HAP-1 (cell line): ENCODE measurements at regions of chr12 and their contacts with region 1.

Region 1: GRCh38 chr12:48618541-48618940 is 48.7 kb upstream of the LALBA start:
- DNase-seq: peak; percentile 61 to 86
- H3K4me3 ChIP-seq: no peak overlapping the region
- H3K4me1 ChIP-seq: no peaks in the 10 kb centered on the region
- H3K27me3 ChIP-seq: peaks cover 2% of the 10 kb centered on the region; the same call in 1 of the 2 replicates

Region 2: DNA sequence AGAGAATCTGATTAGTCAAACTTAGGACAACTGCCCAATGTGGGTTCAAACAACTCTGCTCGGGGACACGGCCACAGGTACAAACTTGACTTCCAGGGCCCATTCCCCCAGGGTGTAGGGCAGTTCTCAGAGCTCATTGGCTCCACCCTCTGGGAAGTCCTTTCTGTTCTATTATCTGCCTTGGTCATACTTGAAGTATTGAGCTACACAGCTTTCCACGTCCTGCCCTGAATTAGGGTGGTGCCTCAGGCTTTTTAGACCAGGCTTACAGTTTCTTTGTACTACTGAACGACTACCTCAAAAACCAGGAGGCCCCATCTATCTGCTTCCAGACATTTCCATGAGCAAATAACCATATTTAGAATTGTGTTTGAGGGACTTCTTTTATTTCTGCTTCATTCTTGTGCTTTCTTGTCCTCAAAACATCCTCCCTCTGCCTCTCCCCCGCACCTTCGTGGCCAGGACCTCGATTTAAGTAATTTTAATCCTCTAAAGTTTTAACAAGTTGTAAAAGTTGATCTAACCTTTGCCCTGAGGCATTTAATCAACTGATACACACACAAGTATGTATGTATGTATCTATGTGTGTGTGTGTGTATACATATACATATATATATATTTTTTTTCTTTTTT is 1257.0 kb before region 1 on chr12:
- in situ Hi-C with region 1: no loop called
- DNase-seq: no peak
- H3K4me3 ChIP-seq: no peak overlapping the region
- H3K4me1 ChIP-seq: no peaks in the 10 kb centered on the region
- H3K27me3 ChIP-seq: no peaks in the 10 kb centered on the region

Region 3: DNA sequence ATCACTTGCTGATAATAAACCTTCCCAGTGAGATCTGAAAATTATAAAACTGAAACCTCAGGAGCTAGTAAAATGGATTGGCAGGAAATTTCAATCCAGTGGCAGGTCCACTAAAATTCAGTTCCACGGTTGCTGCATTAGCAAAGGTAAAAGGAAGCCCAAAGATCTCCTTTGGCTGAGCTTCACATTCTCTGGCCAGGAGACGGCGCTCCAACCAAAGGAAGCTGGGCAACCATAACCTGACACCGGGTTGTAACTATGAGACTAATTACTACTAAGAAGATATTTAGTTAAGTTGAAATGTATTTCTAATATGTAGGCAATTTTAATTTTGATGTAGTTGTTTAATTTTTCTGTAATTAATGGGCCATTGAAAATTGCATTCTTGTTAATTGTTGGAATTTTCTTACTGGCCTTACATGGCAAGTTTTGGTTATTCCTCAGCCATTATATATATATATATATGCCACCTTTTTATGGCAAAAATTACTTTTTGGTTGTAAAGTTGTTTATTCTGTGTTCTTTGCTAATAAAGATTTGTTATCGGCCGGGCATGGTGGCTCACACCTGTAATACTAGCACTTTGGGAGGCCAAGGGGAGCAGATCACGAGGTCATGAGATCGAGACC is 76.1 kb before region 1 on chr12:
- in situ Hi-C with region 1: loop called (anchors 5 kb)
- DNase-seq: peak; percentile 53 to 79
- H3K4me3 ChIP-seq: no peak overlapping the region
- H3K4me1 ChIP-seq: peaks cover 10% of the 10 kb centered on the region
- H3K27me3 ChIP-seq: no peaks in the 10 kb centered on the region

Region 4: DNA sequence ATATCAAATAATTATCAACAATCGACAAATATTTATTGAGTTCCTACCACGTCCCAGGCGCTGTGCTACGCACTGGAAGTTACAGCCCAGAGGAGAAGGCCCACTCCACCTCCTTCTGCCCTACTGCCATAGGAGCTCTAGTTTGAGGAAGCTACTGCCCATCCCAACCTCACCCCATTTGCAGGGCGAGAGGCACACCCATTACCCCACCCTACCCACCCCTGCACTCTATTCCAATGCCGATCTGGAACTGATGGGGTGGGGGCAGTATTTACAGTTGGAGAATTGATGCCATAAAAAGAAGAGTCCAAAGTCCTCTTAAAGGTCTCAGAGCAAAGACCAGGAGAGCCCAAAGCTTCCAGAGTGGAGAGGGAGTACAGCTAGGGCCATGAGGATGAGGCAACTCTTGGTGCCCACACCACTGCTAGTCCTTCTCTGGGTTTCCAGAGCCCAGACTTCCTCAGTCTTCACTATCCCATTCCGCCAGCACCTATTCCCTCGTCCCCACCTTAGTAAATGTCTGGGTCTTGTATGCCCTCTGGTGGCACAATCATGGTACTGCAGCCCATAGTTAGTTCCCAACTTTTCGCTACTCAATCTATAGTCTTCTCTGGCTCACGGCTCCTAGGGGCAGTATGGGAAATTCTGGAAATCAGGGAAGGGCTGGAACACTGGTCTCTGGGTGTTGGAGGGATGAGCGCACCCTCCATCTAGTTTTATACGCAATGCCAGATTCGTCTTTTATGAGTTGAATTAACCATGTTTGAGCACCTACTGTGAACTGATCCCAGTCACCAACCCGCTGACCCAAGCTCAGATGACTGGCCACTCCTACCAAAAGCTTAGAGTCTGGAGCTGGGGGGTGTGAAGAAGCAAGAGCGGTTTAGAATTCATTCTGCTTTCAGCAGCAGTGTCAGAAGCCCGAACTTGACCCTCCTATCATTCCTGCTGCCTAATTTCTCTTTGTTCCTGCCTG is 177.2 kb after region 1 on chr12:
- in situ Hi-C with region 1: no loop called
- DNase-seq: peak; percentile 84
- H3K4me3 ChIP-seq: no peak overlapping the region
- H3K4me1 ChIP-seq: peaks cover 11% of the 10 kb centered on the region
- H3K27me3 ChIP-seq: no peaks in the 10 kb centered on the region